OCI-LY7 (cell line): ENCODE measurements at regions of chr2 and their contacts with region 1.

Region 1: GRCh38 chr2:40317047-40317446 is 134.8 kb downstream of the SLC8A1 start:
- DNase-seq: no peak
- H3K4me3 ChIP-seq: no peak overlapping the region
- H3K27ac ChIP-seq: no peak overlapping the region
- H3K4me1 ChIP-seq: peaks cover 19% of the 10 kb centered on the region
- CTCF ChIP-seq: no peak

Region 2: DNA sequence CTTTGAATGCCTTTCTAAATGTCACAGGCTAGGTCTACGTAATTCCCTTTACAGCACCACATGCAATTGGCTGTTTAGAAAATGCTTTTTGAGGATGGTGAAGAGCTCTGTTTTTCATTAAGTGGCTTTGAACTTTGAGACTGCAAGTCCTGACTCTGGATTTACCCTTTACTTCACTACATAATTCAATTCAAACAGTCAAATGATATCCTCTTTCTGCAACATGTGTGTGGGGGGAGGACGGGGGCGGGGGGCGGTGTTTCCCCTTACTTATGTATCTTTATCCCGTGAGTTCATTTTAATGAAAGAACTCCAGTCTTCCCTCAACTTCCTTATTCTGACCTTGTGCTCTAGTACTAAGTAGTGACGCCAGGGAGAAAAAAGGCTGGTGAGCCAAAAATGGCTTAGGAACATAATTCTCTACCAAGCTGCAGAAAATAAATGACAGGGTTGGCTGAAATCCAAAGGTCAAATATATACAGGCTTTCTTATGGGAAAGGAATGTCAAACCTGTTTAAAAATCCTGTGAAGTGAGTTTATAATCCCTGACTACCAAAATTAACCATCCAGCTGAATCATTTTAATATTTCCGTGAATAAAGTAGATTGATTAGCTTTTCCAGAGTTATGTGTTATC is 15.3 kb after region 1 on chr2:
- CTCF ChIA-PET with region 1: no interaction called
- POLR2A ChIA-PET with region 1: interaction called, 14 read pairs
- intact Hi-C with region 1: no loop called
- DNase-seq: no peak
- H3K4me3 ChIP-seq: no peak overlapping the region
- H3K27ac ChIP-seq: no peak overlapping the region
- H3K4me1 ChIP-seq: no peaks in the 10 kb centered on the region
- CTCF ChIP-seq: no peak

Region 3: DNA sequence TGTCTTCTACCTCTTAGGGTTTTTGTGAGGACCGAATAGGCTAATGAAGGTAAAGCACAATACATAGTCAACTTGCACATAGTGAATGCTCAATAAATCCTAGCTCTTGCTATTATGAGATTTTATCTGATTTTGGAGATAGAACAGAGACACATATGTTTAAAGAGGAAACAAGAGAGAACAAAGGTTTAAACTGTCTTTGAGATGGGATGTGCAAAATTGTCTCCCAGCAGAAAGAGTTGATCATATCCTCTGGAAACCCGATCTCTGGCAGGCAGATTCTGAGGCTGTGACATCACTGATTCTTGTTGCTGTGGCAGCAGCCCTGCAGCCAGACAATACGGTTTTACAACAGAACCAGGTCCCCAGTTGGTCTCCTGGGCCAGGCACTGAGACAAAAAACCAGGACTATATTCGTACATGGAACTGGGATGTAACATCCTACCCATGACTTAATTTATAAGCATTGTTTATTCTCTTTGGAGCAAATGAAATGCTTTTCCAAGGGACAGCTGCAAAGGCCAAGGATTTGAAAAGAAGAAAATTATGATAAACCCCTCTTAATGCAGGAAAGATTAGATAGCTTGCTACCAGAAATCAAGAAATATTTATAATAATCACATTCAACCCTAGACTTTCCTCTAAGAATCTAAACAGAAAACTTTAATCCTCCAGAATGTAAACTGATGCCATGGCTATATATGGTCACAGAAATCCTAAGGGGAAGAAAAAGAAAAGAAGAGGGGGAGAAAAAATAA is 54.7 kb after region 1 on chr2:
- CTCF ChIA-PET with region 1: no interaction called
- POLR2A ChIA-PET with region 1: no interaction called
- intact Hi-C with region 1: no loop called
- DNase-seq: no peak
- H3K4me3 ChIP-seq: no peak overlapping the region
- H3K27ac ChIP-seq: no peak overlapping the region
- H3K4me1 ChIP-seq: no peaks in the 10 kb centered on the region
- CTCF ChIP-seq: no peak

Region 4: DNA sequence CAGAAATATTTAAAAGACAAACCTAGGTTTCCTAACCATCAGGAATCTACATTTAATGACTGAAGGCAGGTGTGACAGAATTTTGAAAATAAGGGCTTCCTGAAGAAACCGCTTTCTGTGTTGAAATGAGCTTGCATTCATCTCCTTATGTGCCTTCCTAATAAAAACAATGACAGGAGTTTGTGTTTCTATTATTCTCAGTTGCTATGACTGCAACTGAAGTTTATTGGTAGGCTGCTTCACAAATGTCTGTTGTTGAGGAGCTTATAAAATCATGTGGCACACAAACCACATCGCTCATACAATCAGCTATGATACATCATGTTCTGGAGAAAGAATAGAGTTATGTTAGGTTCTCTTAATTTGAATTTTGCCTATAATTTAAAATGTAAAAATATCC is 497.6 kb after region 1 on chr2:
- CTCF ChIA-PET with region 1: no interaction called
- POLR2A ChIA-PET with region 1: no interaction called
- intact Hi-C with region 1: no loop called
- DNase-seq: no peak
- H3K4me3 ChIP-seq: no peak overlapping the region
- H3K27ac ChIP-seq: no peak overlapping the region
- H3K4me1 ChIP-seq: no peaks in the 10 kb centered on the region
- CTCF ChIP-seq: no peak